Right ventricle myocardium inferior (tissue), 1 donor: ENCODE measurements at regions of chr18 and their contacts with region 1.

Region 1: DNA sequence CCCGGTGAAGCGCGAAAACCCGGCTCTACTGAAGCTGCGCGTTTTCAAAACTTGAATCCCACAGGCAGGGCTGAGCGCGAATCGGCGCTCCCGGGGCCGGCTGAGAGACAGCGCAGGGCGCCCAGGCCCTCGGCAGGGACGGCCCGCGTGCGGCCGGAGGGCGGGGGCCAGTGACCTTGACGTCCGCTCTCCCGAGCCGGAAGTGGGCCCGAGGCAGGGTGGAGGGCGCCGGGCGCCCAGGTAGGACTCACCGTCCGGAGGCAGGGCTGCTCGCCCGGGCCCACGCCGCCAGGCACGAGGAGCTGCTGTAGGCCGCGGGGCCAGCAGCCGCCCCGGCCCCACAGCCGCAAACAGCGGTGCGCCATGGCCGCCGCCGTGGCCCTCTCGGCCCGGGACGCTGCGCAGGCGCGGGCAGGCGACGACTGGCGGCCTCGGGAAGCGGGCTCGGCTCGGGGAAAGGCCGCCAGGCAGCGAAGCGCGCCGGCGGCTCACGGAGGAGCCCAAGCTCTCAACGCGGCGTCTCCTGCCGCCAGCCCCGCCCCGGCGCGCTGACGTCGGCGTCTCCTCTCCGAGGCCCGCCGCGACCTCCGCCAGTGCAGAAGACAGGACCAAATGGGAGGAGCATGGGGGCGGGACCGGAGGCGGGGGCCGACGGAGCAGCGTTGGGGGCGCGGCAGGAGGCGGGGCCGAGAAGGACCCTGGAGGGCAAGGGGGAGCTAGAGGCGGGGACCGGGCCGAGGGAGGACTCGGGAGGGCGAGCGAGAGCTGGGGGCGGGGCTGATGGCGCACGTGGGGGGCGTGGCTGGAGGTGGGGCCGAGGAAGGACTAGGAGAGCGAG is at the start of gene AFG3L2:
- DNase-seq: peak; percentile 100
- ATAC-seq: peak; percentile 95
- total RNA-seq, gene AFG3L2: 140 TPM

Region 2: DNA sequence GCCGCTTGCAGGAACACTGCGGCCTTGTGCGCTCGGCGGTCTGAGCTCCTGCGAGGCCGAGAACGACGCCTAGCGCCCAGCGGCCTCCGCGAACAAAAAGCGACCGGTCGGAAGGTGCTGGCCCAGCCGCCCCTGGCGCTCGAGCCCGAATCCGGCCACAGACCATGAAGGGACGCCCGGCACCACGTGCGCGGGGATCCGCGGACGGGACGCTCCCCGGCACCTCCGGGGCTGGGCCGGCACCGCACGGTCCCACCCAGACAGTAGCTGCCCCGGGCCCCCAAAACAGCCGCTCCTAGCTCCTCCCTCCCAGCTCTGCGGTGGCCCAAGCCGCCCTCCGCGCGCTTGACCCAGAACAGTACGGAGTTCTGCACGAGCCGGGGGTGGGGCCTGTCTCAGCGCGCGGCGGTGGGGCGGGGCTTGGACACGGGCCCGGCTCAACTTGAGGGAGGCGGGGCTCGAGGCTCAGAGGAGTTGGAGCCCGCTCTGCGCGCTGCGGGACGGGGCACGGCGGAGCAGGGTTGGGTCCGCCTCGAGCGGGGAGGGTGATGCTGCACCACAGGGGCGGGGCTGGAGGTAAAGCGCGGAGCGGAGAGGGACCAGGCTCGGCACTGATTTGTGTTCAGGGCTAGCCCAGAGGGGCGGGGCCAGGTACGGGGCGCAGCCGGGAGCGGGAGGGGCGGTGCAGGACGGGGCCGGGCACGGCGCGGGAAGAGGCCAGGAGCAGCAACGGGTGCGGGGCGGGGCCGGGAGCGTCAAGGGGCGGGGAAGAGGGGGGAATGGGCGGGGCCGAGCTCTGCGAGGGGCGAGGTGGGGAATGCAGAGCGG is 396.2 kb before region 1 on chr18:
- intact Hi-C with region 1: loop called (anchors 10 kb)
- DNase-seq: peak; percentile 99
- ATAC-seq: peak; percentile 96

Region 3: DNA sequence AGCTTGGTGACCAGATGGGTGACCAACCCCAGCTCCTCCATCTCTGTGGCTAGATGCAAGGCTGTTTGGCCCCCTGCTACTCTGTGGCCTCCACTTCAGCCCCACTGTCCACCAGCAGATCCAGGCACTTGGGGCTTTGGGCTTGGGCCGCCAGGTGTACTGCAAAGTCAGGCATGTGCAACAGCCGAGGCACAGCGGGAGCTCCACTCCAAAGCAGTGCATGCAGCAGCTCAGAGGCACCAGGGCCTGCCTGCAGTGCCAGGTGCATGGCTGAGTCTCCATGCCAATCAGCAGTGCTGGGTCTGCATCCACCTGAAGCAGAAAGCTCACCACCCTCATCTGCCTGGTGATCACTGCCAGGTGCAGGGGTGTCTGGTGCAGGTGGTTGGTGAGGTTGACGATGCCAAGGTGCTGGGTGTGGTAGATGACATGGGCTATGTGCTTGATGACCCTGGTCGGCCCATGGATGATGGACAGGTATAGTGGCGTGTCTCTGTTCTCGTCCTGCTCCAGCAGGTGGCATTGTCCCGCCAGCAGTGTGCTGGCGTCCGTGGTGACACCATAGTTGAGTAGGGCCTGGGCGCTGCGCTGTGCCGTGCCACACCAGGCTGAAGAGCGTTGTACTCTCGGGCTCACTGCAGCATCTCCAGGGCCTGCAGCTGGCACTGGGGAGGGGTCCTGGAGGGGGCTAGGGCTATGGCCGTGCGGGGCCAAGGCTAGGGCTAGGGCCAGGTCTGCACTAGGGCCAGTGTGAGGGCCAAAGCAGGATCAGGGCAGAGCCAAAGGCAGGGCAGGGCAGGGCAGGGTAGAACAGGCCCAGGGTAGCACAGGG is 284.3 kb before region 1 on chr18:
- intact Hi-C with region 1: no loop called
- DNase-seq: peak; percentile 69
- ATAC-seq: peak; percentile 67

Region 4: DNA sequence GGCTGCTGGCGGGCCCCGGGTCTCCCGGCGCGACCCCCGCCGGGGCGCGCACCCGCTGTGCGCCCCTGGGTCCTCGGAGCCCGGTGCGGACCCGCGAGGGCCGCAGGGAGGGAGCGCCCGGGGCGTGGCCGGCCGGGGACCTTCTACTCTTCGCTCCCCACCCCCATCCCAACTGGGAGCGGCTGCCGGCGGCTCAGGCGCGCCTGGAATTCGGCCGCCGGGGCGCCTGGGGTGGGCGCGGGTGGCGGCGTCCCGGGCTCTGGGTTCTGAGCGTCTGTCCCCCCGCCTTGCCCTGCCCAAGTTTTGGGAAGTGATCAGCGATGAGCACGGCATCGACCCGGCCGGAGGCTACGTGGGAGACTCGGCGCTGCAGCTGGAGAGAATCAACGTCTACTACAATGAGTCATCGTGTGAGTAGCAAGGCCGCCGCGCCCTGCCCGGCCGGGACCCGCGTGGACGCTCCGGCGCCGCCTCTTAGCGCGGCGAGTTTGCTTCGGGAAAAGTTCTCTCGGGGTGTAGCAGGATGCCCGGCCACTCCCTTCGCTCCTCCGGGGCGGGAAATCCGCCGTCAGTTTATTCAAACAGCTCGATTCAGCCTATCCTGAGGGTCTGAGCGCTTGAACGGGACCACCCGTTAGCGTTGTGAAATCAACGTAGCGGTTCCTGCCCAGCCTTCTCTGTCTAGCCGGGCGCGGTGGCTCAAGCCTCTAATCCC is 68.4 kb before region 1 on chr18:
- intact Hi-C with region 1: loop called (anchors 2 kb)
- DNase-seq: peak; percentile 92
- ATAC-seq: peak; percentile 82

Region 5: DNA sequence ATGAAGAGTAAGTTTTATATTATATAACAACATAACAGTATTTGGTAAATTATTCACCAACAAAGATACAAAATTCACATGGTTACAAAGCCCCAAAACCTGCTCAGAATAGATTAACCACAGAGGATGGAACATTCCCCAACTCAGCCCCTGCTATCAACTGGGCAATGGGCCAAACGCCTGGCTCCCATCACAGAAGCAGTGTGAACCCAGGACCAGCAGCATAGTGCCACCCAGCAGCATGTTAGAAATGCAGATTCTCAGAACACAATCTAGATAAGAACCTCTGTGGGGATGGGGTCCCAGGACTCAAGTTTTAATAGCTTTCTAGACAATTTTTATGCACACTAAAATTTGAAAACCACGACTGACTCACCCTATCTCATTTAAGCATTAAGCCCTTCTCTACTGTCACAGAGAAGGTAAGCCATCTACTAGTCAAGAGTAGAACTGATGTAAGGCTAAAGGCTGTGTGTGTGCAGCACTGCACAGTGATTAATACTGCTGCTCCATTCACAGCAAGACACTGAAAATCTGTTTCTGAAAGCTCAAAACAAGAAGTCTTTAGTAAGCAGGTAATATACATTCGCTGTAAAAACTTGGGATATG is 15.1 kb before region 1 on chr18:
- intact Hi-C with region 1: loop called (anchors 1 kb)
- DNase-seq: peak; percentile 75
- ATAC-seq: peak; percentile 74

Region 6: GRCh38 chr18:12420831-12421421 is 44.0 kb after region 1 on chr18:
- intact Hi-C with region 1: no loop called
- DNase-seq: no peak
- ATAC-seq: no peak

Region 7: GRCh38 chr18:12460874-12461273 is 83.9 kb after region 1 on chr18:
- intact Hi-C with region 1: no loop called
- DNase-seq: no peak
- ATAC-seq: peak; percentile 54

Region 8: DNA sequence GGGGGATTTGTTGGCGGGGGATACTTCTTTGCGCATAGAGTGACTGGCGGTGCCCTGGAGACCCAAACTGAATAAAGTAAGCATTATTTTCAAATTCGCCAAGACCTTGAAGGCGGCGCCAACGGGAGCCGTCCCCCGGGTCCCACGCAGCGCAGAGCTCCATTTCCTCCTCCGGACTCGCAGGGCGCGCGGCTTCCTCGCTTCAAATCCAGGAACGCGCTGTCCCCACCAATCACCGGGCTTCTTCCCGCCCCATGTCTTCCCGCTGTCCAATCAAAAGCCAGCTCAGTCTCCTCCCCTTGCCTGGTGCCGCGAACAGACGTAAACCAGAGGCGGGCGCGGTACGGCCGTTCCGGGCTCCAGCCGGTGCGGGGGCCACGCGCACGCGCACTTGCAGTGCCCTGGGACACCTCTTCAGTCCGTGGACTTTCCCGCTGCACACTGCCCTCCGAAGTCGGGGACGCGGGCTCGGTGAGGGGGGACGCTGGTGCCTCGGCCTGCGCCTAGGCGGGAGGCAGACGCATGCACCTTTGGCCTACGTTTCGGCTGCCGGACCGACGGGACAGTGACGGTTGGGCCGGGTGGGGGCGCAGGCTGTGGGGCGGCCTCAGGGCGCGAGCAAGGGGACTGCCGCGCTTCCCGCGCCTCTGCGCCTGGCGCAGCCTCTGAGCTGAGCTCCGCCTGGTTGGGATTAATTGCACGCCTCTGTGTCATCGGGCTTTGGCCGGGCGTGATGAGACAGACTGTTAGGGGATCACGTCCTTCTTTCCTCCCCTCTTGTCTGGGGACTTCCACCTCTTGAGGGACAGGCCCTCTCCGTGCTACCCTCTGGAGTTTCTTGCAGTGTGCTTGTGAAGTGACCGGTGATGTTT is 614.3 kb after region 1 on chr18 and contains the start of gene CEP192:
- intact Hi-C with region 1: loop called (anchors 10 kb)
- DNase-seq: peak; percentile 98
- ATAC-seq: peak; percentile 99
- total RNA-seq, gene CEP192: 25.6 TPM

Region 9: DNA sequence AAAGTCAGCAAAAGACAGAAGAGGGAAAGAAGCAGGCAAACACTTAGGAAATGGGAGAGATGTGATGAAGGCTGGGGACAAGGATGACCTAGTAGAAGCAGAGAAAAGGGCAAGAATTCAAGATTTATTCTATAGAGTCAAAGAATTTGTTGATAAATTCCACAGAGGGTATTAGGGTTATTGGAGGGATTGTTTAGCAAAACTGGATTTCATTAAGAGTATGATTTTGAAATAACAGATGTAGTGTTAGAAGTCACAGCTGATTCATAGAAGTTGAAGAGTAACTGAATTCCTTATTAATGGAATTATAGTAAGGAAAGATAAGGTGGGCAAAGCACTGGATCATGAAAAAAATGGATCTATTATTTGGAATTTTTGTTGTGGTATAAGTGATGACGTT is 662.9 kb after region 1 on chr18:
- intact Hi-C with region 1: no loop called
- DNase-seq: no peak
- ATAC-seq: no peak